ENCODE measurements at regions of chr6 and their contacts with region 1.

Region 1: DNA sequence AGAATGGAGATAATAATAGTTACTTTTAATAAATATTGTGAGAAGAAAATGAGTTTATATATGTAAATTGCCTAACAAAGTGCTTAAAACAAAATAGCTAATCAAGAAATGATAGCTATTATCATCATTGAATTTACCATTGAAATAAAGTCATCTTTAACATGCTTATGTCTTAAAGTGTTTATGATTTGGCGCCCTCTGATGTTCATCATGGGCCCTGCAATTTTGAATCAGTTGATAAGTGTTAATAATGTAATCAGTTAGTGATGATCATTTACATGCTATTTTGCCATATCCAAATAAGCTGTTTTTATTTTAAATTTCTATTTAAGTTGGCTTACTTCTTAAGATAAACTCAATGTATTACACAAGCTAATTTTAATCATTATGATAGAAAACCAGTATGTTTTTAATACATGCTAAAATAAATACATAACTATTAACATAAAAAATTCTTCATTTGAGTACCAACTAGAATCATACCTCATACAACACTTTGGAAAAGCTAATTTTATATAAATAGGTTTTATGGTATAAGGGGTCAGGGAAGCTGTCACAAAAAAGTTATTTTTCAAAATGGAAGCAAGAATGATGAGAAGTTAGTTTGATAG is 39.2 kb upstream of the TPD52L1 start:
- DNase-seq: peak; percentile 38 to 57
- H3K4me3 ChIP-seq: no peak overlapping the region
- H3K27ac ChIP-seq: no peak overlapping the region
- H3K4me1 ChIP-seq: no peaks in the 10 kb centered on the region
- H3K27me3 ChIP-seq: no peaks in the 10 kb centered on the region
- CTCF ChIP-seq: peak; percentile 98

Region 2: GRCh38 chr6:124917769-124918168 is 196.6 kb before region 1 on chr6:
- CTCF ChIA-PET with region 1: interaction called, 24 read pairs
- POLR2A ChIA-PET with region 1: no interaction called
- intact Hi-C with region 1: no loop called
- DNase-seq: no peak
- H3K4me3 ChIP-seq: no peak overlapping the region
- H3K27ac ChIP-seq: no peak overlapping the region
- H3K4me1 ChIP-seq: no peaks in the 10 kb centered on the region
- H3K27me3 ChIP-seq: no peaks in the 10 kb centered on the region
- CTCF ChIP-seq: no peak

Region 3: DNA sequence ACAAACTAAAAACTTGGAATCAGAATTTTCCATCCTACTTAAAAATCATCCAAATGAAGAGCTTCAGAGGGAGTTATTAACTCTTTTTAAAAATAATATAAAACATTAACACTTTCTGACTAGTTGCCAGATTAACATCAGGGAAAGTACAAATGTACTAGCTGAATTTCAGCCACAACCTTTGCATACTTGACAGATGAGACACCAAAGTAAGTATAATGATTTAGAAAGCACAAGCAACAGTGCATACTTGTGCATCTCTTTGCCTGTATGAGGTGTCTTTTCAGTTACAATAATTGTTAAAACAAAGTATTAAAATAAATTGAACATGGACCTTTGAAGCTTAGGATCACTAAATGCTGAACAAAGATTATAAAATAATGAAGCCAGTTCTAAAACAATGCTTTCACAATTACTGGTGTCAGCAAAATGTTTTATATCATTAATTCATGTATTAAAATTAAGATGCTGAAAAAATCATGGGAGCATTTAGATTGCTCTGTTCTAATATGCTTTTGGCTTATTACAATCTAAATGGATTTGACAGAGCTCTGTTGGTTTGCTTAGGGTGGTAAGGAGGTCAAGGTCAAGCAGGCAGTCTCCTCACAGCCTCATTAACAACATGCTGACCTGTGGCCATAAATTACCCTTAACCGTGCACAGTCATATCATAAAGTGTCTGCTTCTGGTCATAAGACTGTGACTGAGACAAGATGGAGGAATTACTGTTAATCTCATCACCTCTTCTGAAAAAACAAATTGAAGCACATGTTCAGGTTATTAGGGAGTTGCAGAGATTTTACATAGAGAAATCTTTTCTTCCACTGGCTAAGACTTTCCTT is 137.1 kb before region 1 on chr6:
- CTCF ChIA-PET with region 1: interaction called, 13 read pairs
- POLR2A ChIA-PET with region 1: no interaction called
- intact Hi-C with region 1: no loop called
- DNase-seq: no peak
- H3K4me3 ChIP-seq: no peak overlapping the region
- H3K27ac ChIP-seq: peak overlapping the region; percentile 37
- H3K4me1 ChIP-seq: peaks cover 18% of the 10 kb centered on the region
- H3K27me3 ChIP-seq: no peaks in the 10 kb centered on the region
- CTCF ChIP-seq: no peak